Esophagus muscularis mucosa (tissue), 4 donors: ENCODE measurements at regions of chr7 and their contacts with region 1.

Region 1: DNA sequence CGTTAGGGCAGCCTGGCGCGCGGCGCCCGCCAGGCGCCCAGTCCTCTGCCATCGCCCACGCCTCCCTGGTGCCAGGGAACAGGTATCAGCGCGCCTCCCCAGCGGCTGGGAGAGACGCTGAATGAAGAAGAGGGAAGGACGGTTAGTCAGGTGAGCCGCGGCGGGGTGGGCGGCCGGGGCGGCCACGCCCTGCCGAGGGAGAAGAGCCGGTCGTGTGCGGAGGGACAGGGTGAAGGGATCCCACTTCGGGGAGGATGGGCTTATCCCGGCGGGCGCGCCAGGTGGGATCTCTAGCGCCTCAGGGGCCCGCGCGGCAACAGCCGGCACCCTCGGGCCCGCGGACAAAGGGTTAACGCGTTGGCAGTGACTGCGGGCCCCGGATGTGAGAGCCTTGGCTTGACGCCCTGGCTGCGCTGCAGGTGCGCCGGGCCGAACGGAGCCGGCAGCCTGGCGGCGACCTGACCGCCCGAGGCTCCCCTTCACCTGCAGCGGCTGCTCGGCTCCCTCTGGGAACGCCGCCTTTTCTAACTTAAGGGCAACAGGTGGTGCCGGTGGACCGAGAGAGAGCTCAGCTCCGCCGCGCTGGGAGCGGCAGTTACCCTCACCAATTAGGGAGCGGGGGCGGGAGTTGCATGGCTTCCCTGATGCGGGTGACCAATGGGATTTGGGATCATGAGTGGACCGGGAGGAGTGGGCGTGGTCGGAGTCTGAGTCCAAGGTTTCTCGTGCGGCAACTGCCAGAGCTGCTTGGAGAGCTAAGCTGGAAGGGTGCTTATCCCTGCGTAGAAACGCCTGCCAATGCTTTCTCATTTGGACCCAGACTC is at the start of gene ARL4A:
- DNase-seq: peak; percentile 100
- H3K4me3 ChIP-seq: peak within 1 kb of the TSS; percentile 88 to 97 (median 93)
- H3K27ac ChIP-seq: peak within 1 kb of the TSS; percentile 90 to 96 (median 94)
- H3K4me1 ChIP-seq: peaks cover 0 to 43% (median 33%) of the 10 kb centered on the region in 4 donors
- H3K27me3 ChIP-seq: no peaks in the 10 kb centered on the region
- CTCF ChIP-seq: peak in 2 of 3 experiments; percentile 31 to 58
- EP300 ChIP-seq: no peak
- POLR2A ChIP-seq: peak; percentile 30
- total RNA-seq, gene ARL4A: 34.9 to 62.3 (median 52.4) TPM

Region 2: GRCh38 chr7:12623897-12624498 is 63.1 kb before region 1 on chr7:
- intact Hi-C with region 1: no loop called
- DNase-seq: no peak
- H3K4me3 ChIP-seq: no peak overlapping the region
- H3K27ac ChIP-seq: no peak overlapping the region
- H3K4me1 ChIP-seq: no peaks in the 10 kb centered on the region
- H3K27me3 ChIP-seq: peaks cover 0 to 3% (median 0%) of the 10 kb centered on the region in 4 donors
- CTCF ChIP-seq: peak; percentile 52 to 76 (median 63)
- EP300 ChIP-seq: no peak
- POLR2A ChIP-seq: no peak

Region 3: GRCh38 chr7:12638851-12639467 is 48.1 kb before region 1 on chr7:
- intact Hi-C with region 1: loop called (anchors 2 kb)
- DNase-seq: no peak
- H3K4me3 ChIP-seq: no peak overlapping the region
- H3K27ac ChIP-seq: no peak overlapping the region
- H3K4me1 ChIP-seq: peaks cover 0 to 27% (median 22%) of the 10 kb centered on the region in 4 donors
- H3K27me3 ChIP-seq: no peaks in the 10 kb centered on the region
- CTCF ChIP-seq: peak; percentile 66 to 73 (median 68)
- EP300 ChIP-seq: no peak
- POLR2A ChIP-seq: no peak

Region 4: GRCh38 chr7:13067036-13067435 is 379.9 kb after region 1 on chr7:
- intact Hi-C with region 1: no loop called
- DNase-seq: no peak
- H3K4me3 ChIP-seq: no peak overlapping the region
- H3K27ac ChIP-seq: no peak overlapping the region
- H3K4me1 ChIP-seq: peaks cover 0 to 10% (median 2%) of the 10 kb centered on the region in 4 donors
- H3K27me3 ChIP-seq: no peaks in the 10 kb centered on the region
- CTCF ChIP-seq: no peak
- EP300 ChIP-seq: no peak
- POLR2A ChIP-seq: no peak